ENCODE measurements at regions of chr10 and their contacts with region 1.

Region 1: GRCh38 chr10:3776796-3777571 is 8.0 kb downstream of the KLF6 start:
- DNase-seq: peak; percentile 70
- H3K4me3 Mint-ChIP-seq: peak overlapping the region; percentile 53
- H3K27ac Mint-ChIP-seq: peak overlapping the region; percentile 90
- H3K4me1 Mint-ChIP-seq: peaks cover 65% of the 10 kb centered on the region
- H3K27me3 Mint-ChIP-seq: no peaks in the 10 kb centered on the region

Region 2: GRCh38 chr10:3452173-3452626 is 324.8 kb before region 1 on chr10:
- CTCF ChIA-PET with region 1: no interaction called
- intact Hi-C with region 1: loop called (anchors 1 kb)
- DNase-seq: no peak
- H3K4me3 Mint-ChIP-seq: no peak overlapping the region
- H3K27ac Mint-ChIP-seq: no peak overlapping the region
- H3K4me1 Mint-ChIP-seq: peaks cover 39% of the 10 kb centered on the region
- H3K27me3 Mint-ChIP-seq: no peaks in the 10 kb centered on the region

Region 3: DNA sequence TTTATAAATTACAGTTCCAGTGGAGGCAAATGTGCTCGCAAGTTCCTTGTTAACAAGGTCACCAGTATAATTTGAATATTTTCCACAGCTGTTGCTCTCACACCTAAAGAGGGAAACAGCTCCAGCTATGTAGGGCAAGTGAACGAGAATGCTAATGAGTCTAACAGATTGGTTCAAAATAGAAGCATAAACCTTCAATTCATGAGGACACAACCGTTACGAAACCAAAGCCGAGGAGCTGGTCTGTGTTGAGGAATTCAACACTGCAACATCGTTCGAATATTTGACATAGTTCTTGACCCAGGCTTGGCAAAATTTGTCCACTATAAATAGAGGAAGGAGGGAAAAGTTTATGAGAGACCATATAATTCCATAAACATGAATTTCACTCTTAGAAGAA is 153.2 kb before region 1 on chr10:
- CTCF ChIA-PET with region 1: no interaction called
- intact Hi-C with region 1: loop called (anchors 2 kb)
- DNase-seq: no peak
- H3K4me3 Mint-ChIP-seq: no peak overlapping the region
- H3K27ac Mint-ChIP-seq: no peak overlapping the region
- H3K4me1 Mint-ChIP-seq: peaks cover 21% of the 10 kb centered on the region
- H3K27me3 Mint-ChIP-seq: peaks cover 2% of the 10 kb centered on the region

Region 4: DNA sequence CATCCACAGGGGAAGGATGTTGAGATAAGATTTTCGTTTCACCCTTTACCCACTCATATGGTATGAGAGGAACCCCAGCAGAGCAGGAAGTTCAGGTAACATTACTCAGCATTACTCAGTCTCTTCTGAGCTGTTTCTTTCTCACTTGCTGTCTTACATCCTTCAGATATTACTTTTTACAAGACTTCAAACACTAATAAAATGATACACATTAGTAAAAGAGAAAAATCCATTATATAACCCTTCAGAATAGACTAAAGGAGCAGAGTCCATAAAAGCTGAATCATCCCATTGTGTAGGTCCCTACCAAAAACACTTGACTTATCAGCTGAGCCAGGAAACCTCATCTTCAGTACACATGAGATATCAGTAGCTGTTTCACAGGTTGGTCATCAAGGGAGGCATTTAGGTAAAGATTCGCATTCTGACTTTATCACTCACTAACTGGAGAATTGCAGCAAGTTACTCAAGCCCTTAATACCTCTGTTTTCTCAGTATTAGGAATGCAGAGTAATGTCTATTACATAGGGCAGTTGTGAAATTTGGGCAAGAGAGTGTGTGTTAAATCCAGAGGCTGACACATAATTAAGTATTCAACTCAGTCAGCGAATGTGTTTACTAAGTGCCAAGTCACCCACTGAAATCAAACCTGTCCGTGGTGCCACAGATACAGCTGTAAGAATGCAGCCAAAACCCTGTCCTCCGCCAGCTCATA is 36.7 kb before region 1 on chr10:
- CTCF ChIA-PET with region 1: no interaction called
- intact Hi-C with region 1: loop called (anchors 1 kb)
- DNase-seq: no peak
- H3K4me3 Mint-ChIP-seq: no peak overlapping the region
- H3K27ac Mint-ChIP-seq: peak overlapping the region; percentile 59
- H3K4me1 Mint-ChIP-seq: peaks cover 31% of the 10 kb centered on the region
- H3K27me3 Mint-ChIP-seq: no peaks in the 10 kb centered on the region

Measured in activated naive CD4-positive, alpha-beta T cell treated with anti-CD3 and anti-CD28 coated beads for 36 hours (primary cell).